BJ (cell line): ENCODE measurements at regions of chr12 and their contacts with region 1.

Region 1: DNA sequence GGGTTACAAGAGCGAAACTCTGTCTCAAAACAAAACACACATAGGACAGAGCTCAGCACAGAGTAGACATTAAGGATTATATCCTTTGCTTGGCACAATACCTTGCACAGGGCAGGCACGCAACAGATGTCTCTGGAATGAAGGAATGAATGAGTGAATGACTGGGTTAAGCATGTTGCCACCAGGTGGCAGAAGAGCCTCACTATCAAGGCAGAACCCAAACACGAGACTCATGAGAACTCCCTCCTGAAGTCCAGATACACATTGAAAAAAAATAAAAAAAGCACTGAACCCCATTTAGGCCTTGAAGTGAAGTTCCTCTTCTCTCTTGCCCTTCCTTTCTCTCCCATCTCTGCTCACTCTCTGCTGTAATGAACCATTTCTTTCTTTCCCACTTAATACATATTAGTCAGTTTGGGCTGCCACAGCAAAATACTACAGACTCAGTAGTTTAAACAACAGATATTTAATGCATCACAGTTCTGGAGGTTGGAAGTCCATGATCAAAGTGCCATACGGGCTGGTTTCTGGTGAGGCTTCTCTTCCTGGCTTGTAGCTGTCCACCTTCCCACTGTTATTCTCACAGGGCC is 26.6 kb upstream of the LTA4H start:
- DNase-seq: peak; percentile 28
- H3K4me3 ChIP-seq: no peak overlapping the region
- H3K27me3 ChIP-seq: no peaks in the 10 kb centered on the region
- CTCF ChIP-seq: peak; percentile 79

Region 2: DNA sequence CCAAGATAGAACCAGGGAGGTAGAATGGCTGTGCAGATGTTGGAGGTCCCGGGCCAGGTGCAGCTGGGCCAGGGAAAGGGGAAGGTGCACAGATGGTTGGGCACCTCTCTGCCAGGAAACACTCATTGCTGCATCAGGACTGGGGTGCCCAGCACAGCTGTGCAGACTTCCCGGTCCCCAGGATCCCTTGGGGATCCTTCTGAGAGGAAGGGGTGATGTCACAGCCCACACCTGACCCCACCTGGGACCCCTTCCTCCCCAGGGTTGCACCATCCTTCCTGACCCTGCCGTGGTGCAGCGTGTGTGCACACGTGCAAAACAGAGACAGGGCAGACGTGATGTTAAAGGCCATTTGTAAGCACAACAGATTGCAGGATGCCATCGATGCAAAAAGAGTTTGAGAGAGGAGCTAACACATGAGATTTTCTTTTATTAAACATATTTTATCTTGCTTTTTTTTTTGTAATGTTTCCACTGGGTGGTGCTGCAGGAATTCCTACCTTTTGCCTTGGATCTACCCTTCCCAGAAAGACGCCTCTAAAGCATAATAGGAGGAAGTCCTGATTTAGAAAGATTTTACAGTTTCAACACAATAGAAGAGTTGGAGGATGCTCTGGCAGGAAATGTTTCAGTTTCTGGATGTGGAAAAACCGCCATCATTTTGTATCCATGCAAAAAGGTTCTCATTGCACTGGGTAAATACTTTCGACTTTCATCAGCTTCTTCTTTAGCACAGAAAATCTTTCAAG is 147.0 kb after region 1 on chr12:
- CTCF ChIA-PET with region 1: interaction called, 55 read pairs
- POLR2A ChIA-PET with region 1: no interaction called
- DNase-seq: no peak
- H3K4me3 ChIP-seq: no peak overlapping the region
- H3K27me3 ChIP-seq: no peaks in the 10 kb centered on the region
- CTCF ChIP-seq: no peak